ENCODE measurements at regions of chr4 and their contacts with region 1.

Region 1: GRCh38 chr4:40056716-40057585 is at the start of gene N4BP2:
- DNase-seq: peak; percentile 88
- ATAC-seq: peak; percentile 61
- H3K4me3 Mint-ChIP-seq: peak within 1 kb of the TSS; percentile 92
- H3K27ac Mint-ChIP-seq: peak within 1 kb of the TSS; percentile 100
- H3K4me1 Mint-ChIP-seq: peaks cover 30% of the 10 kb centered on the region
- H3K27me3 Mint-ChIP-seq: no peaks in the 10 kb centered on the region
- total RNA-seq, gene N4BP2: 16.2 to 23.2 TPM

Region 2: DNA sequence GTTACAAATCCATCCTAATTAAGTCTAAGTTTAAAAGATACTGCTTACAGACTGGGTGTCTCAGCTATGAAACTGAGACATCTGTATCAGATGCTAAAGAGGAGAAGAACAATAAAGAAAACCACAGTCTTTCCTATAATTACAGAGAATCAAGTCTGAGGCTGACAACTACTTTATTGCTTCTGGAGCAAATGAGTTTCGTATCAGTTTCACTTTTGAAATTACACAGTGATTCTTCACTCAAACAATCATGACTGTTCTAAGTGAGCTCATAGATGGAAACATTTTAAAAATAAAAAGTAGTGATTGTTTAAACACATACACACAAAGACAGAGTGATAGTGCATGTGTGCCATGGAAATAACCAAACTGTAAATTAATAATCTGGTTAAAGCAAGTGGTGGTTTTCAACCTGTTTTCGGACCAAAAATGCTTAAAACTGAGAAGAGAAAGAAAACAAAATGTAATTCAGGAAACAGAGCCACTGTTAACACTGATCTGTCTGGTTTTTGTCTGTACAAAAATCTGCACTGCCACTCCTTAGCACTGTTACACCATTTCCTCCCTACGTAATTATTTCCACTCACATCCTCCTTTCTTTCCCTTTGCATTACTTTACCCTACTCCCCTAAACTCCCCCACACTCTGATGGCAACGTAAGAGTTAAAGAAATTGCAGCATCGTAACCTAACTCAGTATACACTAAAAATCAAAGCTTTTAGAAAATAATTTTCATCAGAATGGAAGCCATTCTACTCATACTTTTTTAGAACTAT is 703.3 kb before region 1 on chr4:
- CTCF ChIA-PET with region 1: no interaction called
- POLR2A ChIA-PET with region 1: no interaction called
- intact Hi-C with region 1: loop called in 1 of 2 experiments (anchors 10 kb)
- DNase-seq: peak; percentile 47
- ATAC-seq: peak; percentile 85
- H3K4me3 Mint-ChIP-seq: peak overlapping the region; percentile 70
- H3K27ac Mint-ChIP-seq: peak overlapping the region; percentile 94
- H3K4me1 Mint-ChIP-seq: peaks cover 79% of the 10 kb centered on the region
- H3K27me3 Mint-ChIP-seq: no peaks in the 10 kb centered on the region

Region 3: GRCh38 chr4:39977489-39978377 is 79.2 kb before region 1 on chr4 and contains the start of gene PDS5A:
- CTCF ChIA-PET with region 1: interaction called, 6 read pairs
- POLR2A ChIA-PET with region 1: interaction called, 4 read pairs
- intact Hi-C with region 1: loop called (anchors 1 to 2 kb)
- DNase-seq: peak; percentile 95
- ATAC-seq: peak; percentile 90
- H3K4me3 Mint-ChIP-seq: peak within 1 kb of the TSS; percentile 80
- H3K27ac Mint-ChIP-seq: peak within 1 kb of the TSS; percentile 98
- H3K4me1 Mint-ChIP-seq: peaks cover 38% of the 10 kb centered on the region
- H3K27me3 Mint-ChIP-seq: no peaks in the 10 kb centered on the region
- total RNA-seq, gene PDS5A: 98.5 to 102 TPM

Region 4: DNA sequence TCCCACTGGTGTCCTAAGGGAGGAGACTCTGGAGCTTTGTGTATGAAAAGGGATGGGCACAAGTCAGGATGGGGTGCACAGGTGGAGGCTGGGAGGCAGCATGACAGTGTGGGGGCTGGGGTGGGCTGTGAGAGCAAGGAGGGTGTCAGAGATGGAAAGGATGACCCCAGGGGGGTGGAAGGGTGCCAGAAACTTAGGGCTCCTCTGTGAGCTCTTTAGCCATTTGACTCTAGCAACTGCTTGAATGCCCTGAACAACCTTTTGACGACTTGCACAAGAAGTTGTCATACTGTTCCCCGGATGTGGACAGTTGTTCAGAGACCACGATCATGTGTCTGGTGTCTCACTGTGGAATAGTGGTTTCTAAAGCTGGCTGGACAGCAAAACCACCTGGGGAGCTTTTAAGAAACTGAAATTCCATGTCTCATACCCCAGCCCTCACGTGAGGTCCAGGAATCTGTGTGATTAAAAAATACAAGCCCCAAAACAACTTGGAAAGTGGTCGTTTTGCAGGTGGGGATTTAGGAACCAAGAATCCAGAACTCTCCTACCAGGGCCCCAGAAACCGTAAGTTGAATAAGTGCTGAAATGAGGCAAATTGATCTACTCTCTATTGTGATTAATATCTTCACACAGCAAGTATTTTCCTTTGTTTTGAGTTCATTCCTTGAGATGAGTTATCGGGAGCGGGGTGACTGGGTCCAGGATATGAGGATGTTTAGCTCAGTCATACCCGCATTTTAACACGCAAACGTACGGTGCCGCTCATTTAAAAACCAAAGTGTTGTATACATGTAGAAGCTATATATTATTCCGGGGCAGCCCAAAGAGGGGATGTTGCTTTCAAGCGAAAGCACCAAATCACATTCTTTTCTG is 143.3 kb after region 1 on chr4:
- CTCF ChIA-PET with region 1: interaction called, 5 read pairs
- POLR2A ChIA-PET with region 1: interaction called, 6 read pairs
- intact Hi-C with region 1: loop called (anchors 1 to 2 kb)
- DNase-seq: peak; percentile 90
- ATAC-seq: peak; percentile 53
- H3K4me3 Mint-ChIP-seq: peak overlapping the region; percentile 98
- H3K27ac Mint-ChIP-seq: peak overlapping the region; percentile 100
- H3K4me1 Mint-ChIP-seq: peaks cover 40% of the 10 kb centered on the region
- H3K27me3 Mint-ChIP-seq: no peaks in the 10 kb centered on the region

Region 5: GRCh38 chr4:40325189-40326019 is 268.5 kb after region 1 on chr4:
- CTCF ChIA-PET with region 1: interaction called, 13 read pairs
- POLR2A ChIA-PET with region 1: interaction called, 3 read pairs
- intact Hi-C with region 1: loop called (anchors 1 to 2 kb)
- DNase-seq: peak; percentile 78
- ATAC-seq: peak; percentile 98
- H3K4me3 Mint-ChIP-seq: no peak overlapping the region
- H3K27ac Mint-ChIP-seq: no peak overlapping the region
- H3K4me1 Mint-ChIP-seq: peaks cover 27% of the 10 kb centered on the region
- H3K27me3 Mint-ChIP-seq: peaks cover 2% of the 10 kb centered on the region

Region 6: GRCh38 chr4:40840985-40841571 is 784.1 kb after region 1 on chr4:
- CTCF ChIA-PET with region 1: no interaction called
- POLR2A ChIA-PET with region 1: no interaction called
- intact Hi-C with region 1: loop called in 1 of 2 experiments (anchors 5 kb)
- DNase-seq: peak; percentile 93
- ATAC-seq: peak; percentile 97
- H3K4me3 Mint-ChIP-seq: no peak overlapping the region
- H3K27ac Mint-ChIP-seq: no peak overlapping the region
- H3K4me1 Mint-ChIP-seq: peaks cover 5% of the 10 kb centered on the region
- H3K27me3 Mint-ChIP-seq: peaks cover 6% of the 10 kb centered on the region